Ovary (tissue), 10 donors: ENCODE measurements at regions of chr1 and their contacts with region 1.

Region 1: GRCh38 chr1:9874959-9875635 is 35.0 kb downstream of the CTNNBIP1 start:
- DNase-seq: peak; percentile 71 to 84 (median 79)
- H3K4me3 ChIP-seq: no peak overlapping the region
- H3K27ac ChIP-seq: no peak overlapping the region
- H3K4me1 ChIP-seq: peaks cover 3% of the 10 kb centered on the region
- H3K27me3 ChIP-seq: no peaks in the 10 kb centered on the region
- CTCF ChIP-seq: peak; percentile 76 to 94 (median 82)
- EP300 ChIP-seq: no peak
- POLR2A ChIP-seq: no peak

Region 2: GRCh38 chr1:9766759-9767442 is 108.2 kb before region 1 on chr1:
- intact Hi-C with region 1: no loop called
- DNase-seq: no peak
- H3K4me3 ChIP-seq: no peak overlapping the region
- H3K27ac ChIP-seq: no peak overlapping the region
- H3K4me1 ChIP-seq: no peaks in the 10 kb centered on the region
- H3K27me3 ChIP-seq: no peaks in the 10 kb centered on the region
- CTCF ChIP-seq: no peak
- EP300 ChIP-seq: no peak
- POLR2A ChIP-seq: no peak

Region 3: GRCh38 chr1:9942939-9943788 is 68.1 kb after region 1 on chr1 and contains the starts of genes LZIC and NMNAT1:
- intact Hi-C with region 1: loop called in 2 of 4 experiments (anchors 5 kb)
- DNase-seq: peak; percentile 85 to 94 (median 90)
- H3K4me3 ChIP-seq: peak within 1 kb of the TSS; percentile 73
- H3K27ac ChIP-seq: peak within 1 kb of the TSS in 1 of 2 donors; percentile 67
- H3K4me1 ChIP-seq: peaks cover 5% of the 10 kb centered on the region
- H3K27me3 ChIP-seq: no peaks in the 10 kb centered on the region
- CTCF ChIP-seq: peak in 2 of 3 donors; percentile 9 to 48
- EP300 ChIP-seq: no peak
- POLR2A ChIP-seq: peak; percentile 63
- total RNA-seq, gene LZIC: 21.2 to 54.3 (median 40.2) TPM
- total RNA-seq, gene NMNAT1: 2.3 to 8.2 (median 5.8) TPM

Region 4: DNA sequence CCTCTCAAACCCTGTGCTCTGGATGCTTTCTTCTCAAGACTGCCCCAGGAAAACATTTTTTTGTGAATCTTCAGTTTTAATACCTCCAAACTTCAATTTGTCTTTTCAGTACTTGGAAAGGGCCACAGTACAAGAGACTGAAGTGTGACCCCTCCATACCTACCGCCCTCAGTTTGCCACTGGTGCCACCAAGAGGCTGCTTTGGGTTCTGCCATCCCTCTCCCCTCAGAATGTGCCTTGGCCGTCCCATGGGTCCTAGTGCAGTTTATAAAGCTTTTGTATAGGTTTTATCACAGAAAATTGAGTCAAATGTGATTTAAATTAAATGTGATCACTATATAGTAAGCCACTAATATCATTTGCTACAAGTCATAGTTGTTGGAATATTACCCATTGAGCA is 462.9 kb after region 1 on chr1:
- intact Hi-C with region 1: loop called in 1 of 4 experiments (anchors 10 kb)
- DNase-seq: peak; percentile 25 to 58 (median 53)
- H3K4me3 ChIP-seq: no peak overlapping the region
- H3K27ac ChIP-seq: no peak overlapping the region
- H3K4me1 ChIP-seq: no peaks in the 10 kb centered on the region
- H3K27me3 ChIP-seq: no peaks in the 10 kb centered on the region
- CTCF ChIP-seq: peak; percentile 19 to 44 (median 40)
- EP300 ChIP-seq: no peak
- POLR2A ChIP-seq: no peak

Region 5: GRCh38 chr1:10424034-10424433 is 548.9 kb after region 1 on chr1:
- intact Hi-C with region 1: loop called in 2 of 4 experiments (anchors 2 to 10 kb)
- DNase-seq: peak; percentile 49 to 73 (median 57)
- H3K4me3 ChIP-seq: no peak overlapping the region
- H3K27ac ChIP-seq: no peak overlapping the region
- H3K4me1 ChIP-seq: no peaks in the 10 kb centered on the region
- H3K27me3 ChIP-seq: no peaks in the 10 kb centered on the region
- CTCF ChIP-seq: no peak
- EP300 ChIP-seq: no peak
- POLR2A ChIP-seq: no peak

Region 6: DNA sequence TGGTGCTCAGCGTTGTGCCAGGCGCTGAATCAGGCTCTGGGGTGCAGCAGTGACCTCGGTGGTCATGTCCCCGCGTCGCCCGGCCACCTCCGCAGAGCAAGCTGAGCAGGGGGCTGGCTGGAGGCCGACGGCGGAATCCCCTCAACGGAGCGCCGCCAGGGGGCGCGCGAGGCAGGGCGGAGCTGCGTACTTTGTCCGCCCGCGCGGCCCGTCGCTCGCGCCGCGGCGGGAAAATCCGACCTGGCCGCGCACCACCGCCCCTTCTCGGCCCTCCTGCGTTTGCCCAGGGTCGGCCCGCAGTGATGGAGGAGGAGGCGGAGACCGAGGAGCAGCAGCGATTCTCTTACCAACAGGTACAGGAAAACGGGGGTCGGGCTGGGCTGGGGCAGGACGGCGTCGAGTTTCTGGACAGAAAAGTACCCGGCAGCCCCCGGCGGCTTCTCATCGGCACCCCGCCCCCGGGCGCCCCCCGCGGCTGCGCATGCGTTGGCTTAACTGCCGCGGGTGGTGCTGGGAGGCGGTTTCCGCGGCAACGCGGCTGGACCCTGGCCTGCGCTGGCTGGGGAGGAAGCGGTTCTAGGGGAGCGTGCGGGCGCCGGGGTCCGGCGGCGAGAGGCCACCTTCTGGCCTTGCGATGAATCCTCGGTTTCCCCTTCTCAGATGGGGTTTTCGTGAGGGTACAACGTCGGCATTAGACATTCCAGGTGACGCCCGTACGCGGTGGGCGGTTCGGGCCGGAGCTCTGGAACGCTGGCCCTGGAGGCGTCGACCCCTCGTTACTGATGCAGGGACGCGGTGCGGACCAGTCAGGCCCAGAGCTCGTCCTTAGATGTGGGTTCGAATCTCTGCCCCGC is 555.3 kb after region 1 on chr1 and contains the start of gene CENPS:
- intact Hi-C with region 1: loop called in 2 of 4 experiments (anchors 2 to 10 kb)
- DNase-seq: peak; percentile 94 to 97 (median 94)
- H3K4me3 ChIP-seq: peak within 1 kb of the TSS; percentile 78
- H3K27ac ChIP-seq: peak within 1 kb of the TSS in 1 of 2 donors; percentile 19
- H3K4me1 ChIP-seq: no peaks in the 10 kb centered on the region
- H3K27me3 ChIP-seq: no peaks in the 10 kb centered on the region
- CTCF ChIP-seq: peak; percentile 97 to 99 (median 99)
- EP300 ChIP-seq: no peak
- POLR2A ChIP-seq: no peak
- total RNA-seq, gene CENPS: 1.5 to 13.6 (median 9.8) TPM